ENCODE measurements at regions of chr6 and their contacts with region 1.

Region 1: GRCh38 chr6:159608961-159609651 is 83.9 kb downstream of the SOD2 start:
- DNase-seq: peak; percentile 32
- H3K4me3 ChIP-seq: no peak overlapping the region
- H3K27ac ChIP-seq: no peak overlapping the region
- H3K4me1 ChIP-seq: no peaks in the 10 kb centered on the region
- H3K27me3 ChIP-seq: no peaks in the 10 kb centered on the region
- CTCF ChIP-seq: peak; percentile 59

Region 2: GRCh38 chr6:159397753-159398152 is 211.4 kb before region 1 on chr6:
- CTCF ChIA-PET with region 1: no interaction called
- POLR2A ChIA-PET with region 1: interaction called, 17 read pairs
- intact Hi-C with region 1: no loop called
- DNase-seq: no peak
- H3K4me3 ChIP-seq: no peak overlapping the region
- H3K27ac ChIP-seq: no peak overlapping the region
- H3K4me1 ChIP-seq: no peaks in the 10 kb centered on the region
- H3K27me3 ChIP-seq: no peaks in the 10 kb centered on the region
- CTCF ChIP-seq: no peak